ENCODE measurements at regions of chr6 and their contacts with region 1.

Region 1: DNA sequence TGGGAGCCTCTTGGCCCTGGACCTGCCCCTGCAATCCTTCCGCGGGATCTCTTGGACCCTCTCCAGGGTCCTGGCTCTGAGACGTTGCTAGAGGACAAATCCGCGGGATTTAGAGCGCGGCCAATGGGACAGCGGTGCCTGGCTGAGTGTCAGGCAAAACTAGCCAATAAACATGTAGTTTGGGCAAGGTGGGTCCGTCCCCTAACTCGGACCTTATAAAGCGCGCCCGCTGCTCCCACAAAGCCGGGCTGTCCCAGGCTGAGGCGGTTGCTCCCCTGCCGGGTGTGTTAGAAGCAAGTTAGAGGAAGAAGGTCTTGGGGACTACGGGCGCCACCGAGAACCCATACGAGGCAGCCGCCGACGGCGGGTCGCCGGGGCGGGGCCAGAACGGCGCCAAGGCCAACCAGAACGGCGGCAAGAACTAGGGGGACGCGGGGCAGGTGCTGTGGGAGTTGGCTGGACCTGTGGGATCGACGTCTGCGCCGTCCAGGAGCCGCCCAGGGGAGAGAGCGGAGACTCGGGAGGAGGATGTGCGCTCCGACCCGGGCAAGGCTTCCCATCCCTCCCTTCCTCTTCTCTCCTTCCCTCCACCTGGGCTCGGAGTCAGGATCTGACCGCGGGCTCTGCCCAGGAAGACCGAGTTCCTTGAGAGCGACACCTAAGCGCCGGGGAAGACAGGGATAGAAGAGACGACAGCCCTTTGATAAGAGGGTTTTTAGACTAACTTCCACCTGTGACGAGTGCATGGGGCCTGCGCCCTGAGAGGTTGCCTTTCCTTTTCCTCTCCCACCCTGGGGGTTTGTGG is 6.5 kb upstream of the TMEM14A start:
- DNase-seq: peak; percentile 77 to 86
- H3K4me3 ChIP-seq: peak overlapping the region; percentile 87
- H3K27ac ChIP-seq: no peak overlapping the region
- H3K4me1 ChIP-seq: peaks cover 3% of the 10 kb centered on the region; the same call in 1 of the 2 replicates
- H3K27me3 ChIP-seq: no peaks in the 10 kb centered on the region
- CTCF ChIP-seq: no peak

Region 2: DNA sequence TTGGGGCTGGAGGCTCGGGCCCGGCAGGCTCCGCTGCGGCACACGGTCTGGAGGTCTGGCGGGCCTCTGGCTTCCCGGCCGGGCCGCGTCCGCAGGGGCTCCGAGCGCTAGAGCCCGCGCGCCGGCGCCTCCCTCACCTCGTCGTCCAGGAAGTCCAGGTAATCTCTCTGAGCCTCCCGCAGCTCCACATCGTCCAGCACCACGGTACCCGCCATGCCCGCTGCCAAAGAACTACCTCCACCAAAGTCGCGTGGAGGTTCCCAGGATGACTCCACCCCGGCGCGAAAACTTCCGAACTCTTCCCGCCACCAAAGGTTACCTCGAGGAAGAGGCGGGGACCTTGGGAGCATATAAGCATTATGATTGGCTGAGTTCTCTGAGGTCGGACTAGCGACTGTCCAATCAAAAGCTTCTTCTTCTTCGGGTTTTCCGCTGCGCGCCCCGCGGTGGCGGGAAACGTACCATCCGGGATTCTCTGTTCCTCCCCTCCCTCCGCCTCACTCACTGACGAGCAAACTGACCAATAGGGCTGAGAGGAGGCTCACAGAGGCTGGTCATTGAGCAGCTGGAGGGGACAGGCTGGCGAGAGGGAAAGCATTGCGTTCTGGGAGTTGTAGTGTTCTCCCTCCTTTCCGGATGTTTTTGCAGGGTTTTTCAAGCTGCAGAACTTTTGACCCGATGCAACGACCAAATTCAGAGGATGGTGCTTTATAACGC is 379.8 kb before region 1 on chr6 and contains the start of gene MCM3:
- CTCF ChIA-PET with region 1: no interaction called
- POLR2A ChIA-PET with region 1: no interaction called
- intact Hi-C with region 1: loop called (anchors 1 kb)
- DNase-seq: peak; percentile 97 to 98
- H3K4me3 ChIP-seq: peak within 1 kb of the TSS; percentile 72
- H3K27ac ChIP-seq: peak within 1 kb of the TSS; percentile 49
- H3K4me1 ChIP-seq: peaks cover 21% of the 10 kb centered on the region
- H3K27me3 ChIP-seq: no peaks in the 10 kb centered on the region
- CTCF ChIP-seq: no peak
- total RNA-seq, gene MCM3: 90.9 and 111 TPM in 2 replicates

Region 3: DNA sequence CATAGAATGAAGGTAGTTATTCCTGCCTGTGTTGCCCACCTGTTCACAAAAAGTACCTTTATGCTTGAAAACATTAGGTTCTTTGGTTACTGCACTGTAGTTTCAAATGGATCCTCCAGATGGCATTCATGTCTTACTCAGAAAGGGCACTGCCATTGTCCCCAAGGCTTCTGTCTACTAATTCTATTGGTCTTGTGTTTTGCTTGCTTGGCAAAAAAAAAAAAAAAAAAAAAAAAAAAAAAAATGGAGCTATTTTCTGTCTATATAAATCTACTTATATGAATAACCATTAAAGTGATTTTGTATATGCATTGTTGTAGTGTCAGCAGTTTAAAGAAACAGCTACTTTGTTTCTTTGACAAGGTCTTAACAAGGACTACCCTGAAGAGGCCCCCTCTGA is 256.9 kb before region 1 on chr6:
- CTCF ChIA-PET with region 1: interaction called, 11 read pairs
- POLR2A ChIA-PET with region 1: no interaction called
- intact Hi-C with region 1: loop called (anchors 1 kb)
- DNase-seq: peak; percentile 17 to 62
- H3K4me3 ChIP-seq: no peak overlapping the region
- H3K27ac ChIP-seq: no peak overlapping the region
- H3K4me1 ChIP-seq: no peaks in the 10 kb centered on the region
- H3K27me3 ChIP-seq: no peaks in the 10 kb centered on the region
- CTCF ChIP-seq: peak; percentile 77

Region 4: GRCh38 chr6:52503848-52504781 is 160.3 kb before region 1 on chr6:
- CTCF ChIA-PET with region 1: no interaction called
- POLR2A ChIA-PET with region 1: no interaction called
- intact Hi-C with region 1: loop called (anchors 1 kb)
- DNase-seq: peak; percentile 98 to 99
- H3K4me3 ChIP-seq: peak overlapping the region; percentile 12; the same call in 1 of the 2 replicates
- H3K27ac ChIP-seq: peak overlapping the region; percentile 36
- H3K4me1 ChIP-seq: peaks cover 37% of the 10 kb centered on the region
- H3K27me3 ChIP-seq: no peaks in the 10 kb centered on the region
- CTCF ChIP-seq: no peak

Region 5: DNA sequence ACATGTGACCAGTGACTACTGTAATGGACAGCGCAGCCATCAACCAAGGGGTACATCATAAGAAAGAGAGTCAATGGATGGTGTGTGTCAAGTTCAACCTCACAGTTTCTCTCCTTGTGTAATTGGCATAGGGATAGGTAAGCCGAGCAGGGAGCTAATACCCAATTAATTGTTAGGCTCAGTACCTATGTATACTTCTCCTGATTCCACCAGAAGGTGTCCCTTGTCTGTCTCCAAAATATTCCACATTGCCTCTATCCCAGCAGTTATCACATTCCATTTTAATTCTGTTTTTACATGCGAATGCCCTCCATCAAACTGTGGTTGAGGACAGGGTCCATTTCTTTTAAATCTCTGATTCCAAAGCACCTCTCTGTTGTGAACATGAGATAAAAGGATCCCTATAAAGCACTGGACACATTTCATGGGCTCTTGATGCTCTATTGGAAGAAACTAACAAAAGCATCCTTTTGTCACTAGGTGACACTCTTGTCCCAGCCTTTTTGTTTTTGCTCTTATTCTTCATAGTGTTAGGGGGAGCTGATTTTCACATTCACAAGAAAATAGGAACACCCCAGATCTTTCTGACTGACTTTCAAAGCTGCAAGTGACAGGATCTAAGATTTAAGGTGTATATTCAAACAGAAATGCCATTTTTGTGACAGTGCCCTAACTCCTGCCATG is 439.7 kb after region 1 on chr6:
- CTCF ChIA-PET with region 1: no interaction called
- POLR2A ChIA-PET with region 1: interaction called, 10 read pairs
- intact Hi-C with region 1: no loop called
- DNase-seq: peak; percentile 21 to 42
- H3K4me3 ChIP-seq: no peak overlapping the region
- H3K27ac ChIP-seq: no peak overlapping the region
- H3K4me1 ChIP-seq: peaks cover 12% of the 10 kb centered on the region
- H3K27me3 ChIP-seq: no peaks in the 10 kb centered on the region
- CTCF ChIP-seq: peak; percentile 69

Measured in PC-9 (cell line).